CD14-positive monocyte (primary cell): ENCODE measurements at regions of chr12 and their contacts with region 1.

Region 1: DNA sequence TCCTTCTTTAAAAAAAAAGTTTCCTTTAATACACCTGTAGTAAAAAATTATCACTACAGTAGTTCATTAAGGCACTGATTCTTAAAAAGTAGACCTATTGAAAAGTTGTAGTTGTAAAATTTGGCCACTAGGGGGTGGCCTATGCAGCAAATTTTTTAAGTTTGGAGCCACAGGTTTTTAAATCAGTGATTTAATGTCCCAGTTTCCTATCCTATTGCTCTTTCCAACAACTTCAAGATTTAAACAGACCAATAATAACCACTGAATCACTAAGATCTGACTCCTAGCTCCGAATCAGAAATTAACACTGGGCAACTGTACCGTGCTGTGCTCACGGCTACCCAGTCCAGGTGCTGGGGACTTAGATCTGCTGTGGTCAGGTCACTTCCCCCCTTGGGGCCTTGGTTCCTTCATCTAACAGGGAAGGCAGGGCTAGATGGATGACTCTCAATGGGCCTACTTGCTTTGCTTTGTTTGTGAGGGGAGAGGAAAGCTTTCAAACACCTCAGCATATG is 279.3 kb downstream of the MED13L start:
- DNase-seq: peak; percentile 29 to 37 (median 35)
- H3K4me3 ChIP-seq: no peak overlapping the region
- H3K4me3 Mint-ChIP-seq: no peak overlapping the region
- H3K27ac ChIP-seq: peak overlapping the region in 1 of 2 donors; percentile 56
- H3K27ac Mint-ChIP-seq: peak overlapping the region in 5 of 7 donors; percentile 21 to 79 (median 73)
- H3K4me1 ChIP-seq: no peaks in the 10 kb centered on the region
- H3K4me1 Mint-ChIP-seq: peaks cover 3% of the 10 kb centered on the region
- H3K27me3 ChIP-seq: no peaks in the 10 kb centered on the region
- H3K27me3 Mint-ChIP-seq: no peaks in the 10 kb centered on the region
- CTCF ChIP-seq: peak; percentile 85

Region 2: GRCh38 chr12:116703214-116703795 is 705.1 kb after region 1 on chr12:
- intact Hi-C with region 1: loop called (anchors 5 to 10 kb)
- DNase-seq: peak; percentile 50 to 64 (median 63)
- H3K4me3 ChIP-seq: no peak overlapping the region
- H3K4me3 Mint-ChIP-seq: no peak overlapping the region
- H3K27ac ChIP-seq: no peak overlapping the region
- H3K27ac Mint-ChIP-seq: no peak overlapping the region
- H3K4me1 ChIP-seq: no peaks in the 10 kb centered on the region
- H3K4me1 Mint-ChIP-seq: peaks cover 2% of the 10 kb centered on the region
- H3K27me3 ChIP-seq: no peaks in the 10 kb centered on the region
- H3K27me3 Mint-ChIP-seq: peaks cover 0 to 5% (median 0%) of the 10 kb centered on the region in 3 donors
- CTCF ChIP-seq: peak; percentile 94

Region 3: DNA sequence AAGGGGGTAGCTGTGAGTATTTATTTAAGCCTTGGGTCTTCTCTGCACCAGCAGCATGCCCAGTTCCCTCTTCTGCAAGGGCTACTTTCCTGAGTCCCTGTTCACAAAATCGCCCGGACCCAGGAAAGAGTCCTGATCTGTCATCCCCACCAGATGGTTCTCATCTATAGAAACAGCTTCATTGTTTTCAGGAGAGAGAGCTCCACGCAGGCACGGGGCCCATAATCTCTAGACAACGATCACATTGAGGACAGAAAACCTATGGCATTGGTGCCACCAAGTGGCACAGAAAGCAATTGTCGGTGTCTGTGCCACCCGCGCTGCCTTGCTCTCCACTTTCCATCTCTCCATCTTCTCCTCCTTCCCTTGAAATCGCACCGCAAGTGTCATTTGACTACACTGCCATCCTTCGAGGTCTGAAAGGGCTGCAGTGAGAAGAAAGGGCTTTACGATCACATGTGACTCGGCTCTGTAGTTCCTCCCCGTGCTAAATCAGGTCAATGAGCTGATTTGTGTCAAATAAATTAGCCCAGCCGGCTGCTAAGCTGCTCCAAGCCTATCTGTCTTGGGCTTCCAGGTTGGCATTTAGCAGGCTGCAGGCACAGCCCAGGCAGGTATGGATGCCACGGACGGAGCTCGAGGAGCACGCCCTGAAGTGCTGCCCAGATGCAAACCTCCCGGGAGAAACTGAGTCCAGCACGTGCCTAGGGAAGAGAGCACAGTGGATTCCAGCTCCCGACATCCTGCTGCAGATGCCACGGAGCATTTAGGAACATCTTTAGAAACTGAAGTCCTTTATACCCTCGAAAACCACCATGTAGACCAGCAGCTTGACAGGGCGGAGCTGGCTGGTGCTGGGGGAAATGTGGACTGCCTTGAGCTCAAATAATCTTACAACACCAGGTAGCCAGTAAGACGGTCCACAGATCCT is 710.9 kb after region 1 on chr12:
- intact Hi-C with region 1: loop called (anchors 5 to 10 kb)
- DNase-seq: peak; percentile 30 to 41 (median 39)
- H3K4me3 ChIP-seq: no peak overlapping the region
- H3K4me3 Mint-ChIP-seq: peak overlapping the region; percentile 59 to 85
- H3K27ac ChIP-seq: no peak overlapping the region
- H3K27ac Mint-ChIP-seq: peak overlapping the region in 1 of 7 donors; percentile 27
- H3K4me1 ChIP-seq: peaks cover 7 to 8% of the 10 kb centered on the region in 2 donors
- H3K4me1 Mint-ChIP-seq: peaks cover 10% of the 10 kb centered on the region
- H3K27me3 ChIP-seq: peaks cover 15 to 20% of the 10 kb centered on the region in 2 donors
- H3K27me3 Mint-ChIP-seq: peaks cover 18 to 25% (median 20%) of the 10 kb centered on the region in 3 donors
- CTCF ChIP-seq: peak; percentile 75